ENCODE measurements at regions of chr11 and their contacts with region 1.

Region 1: DNA sequence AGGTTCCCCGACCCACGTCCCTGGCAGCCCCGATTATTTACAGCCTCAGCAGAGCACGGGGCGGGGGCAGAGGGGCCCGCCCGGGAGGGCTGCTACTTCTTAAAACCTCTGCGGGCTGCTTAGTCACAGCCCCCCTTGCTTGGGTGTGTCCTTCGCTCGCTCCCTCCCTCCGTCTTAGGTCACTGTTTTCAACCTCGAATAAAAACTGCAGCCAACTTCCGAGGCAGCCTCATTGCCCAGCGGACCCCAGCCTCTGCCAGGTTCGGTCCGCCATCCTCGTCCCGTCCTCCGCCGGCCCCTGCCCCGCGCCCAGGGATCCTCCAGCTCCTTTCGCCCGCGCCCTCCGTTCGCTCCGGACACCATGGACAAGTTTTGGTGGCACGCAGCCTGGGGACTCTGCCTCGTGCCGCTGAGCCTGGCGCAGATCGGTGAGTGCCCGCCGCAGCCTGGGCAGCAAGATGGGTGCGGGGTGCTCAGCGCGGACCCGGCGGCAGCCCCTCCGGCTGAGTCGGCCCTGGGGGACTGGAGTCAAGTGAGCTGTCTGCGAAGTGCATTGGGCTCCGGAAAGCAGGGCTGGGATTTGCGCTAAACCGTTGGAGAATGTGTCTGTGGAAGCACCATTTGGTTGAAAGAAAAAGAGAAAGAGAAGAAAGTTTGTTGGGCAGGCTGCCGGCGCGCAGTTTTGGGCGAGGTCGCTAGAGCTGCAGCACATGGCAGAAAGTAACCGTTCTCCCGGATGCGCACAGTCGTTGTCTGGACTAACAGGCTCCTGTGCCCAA is at the start of gene CD44:
- DNase-seq: peak; percentile 70 to 95 (median 80)
- ATAC-seq: peak; percentile 77
- H3K4me3 ChIP-seq: peak within 1 kb of the TSS; percentile 88
- H3K4me3 Mint-ChIP-seq: peak within 1 kb of the TSS; percentile 97
- H3K27ac ChIP-seq: peak within 1 kb of the TSS; percentile 79 to 97
- H3K27ac Mint-ChIP-seq: peak within 1 kb of the TSS; percentile 96
- H3K4me1 ChIP-seq: peaks cover 46% of the 10 kb centered on the region
- H3K4me1 Mint-ChIP-seq: peaks cover 55% of the 10 kb centered on the region
- H3K27me3 ChIP-seq: no peaks in the 10 kb centered on the region
- H3K27me3 Mint-ChIP-seq: no peaks in the 10 kb centered on the region
- CTCF ChIP-seq: no peak
- total RNA-seq, gene CD44: 1,283 to 1,330 TPM

Region 2: DNA sequence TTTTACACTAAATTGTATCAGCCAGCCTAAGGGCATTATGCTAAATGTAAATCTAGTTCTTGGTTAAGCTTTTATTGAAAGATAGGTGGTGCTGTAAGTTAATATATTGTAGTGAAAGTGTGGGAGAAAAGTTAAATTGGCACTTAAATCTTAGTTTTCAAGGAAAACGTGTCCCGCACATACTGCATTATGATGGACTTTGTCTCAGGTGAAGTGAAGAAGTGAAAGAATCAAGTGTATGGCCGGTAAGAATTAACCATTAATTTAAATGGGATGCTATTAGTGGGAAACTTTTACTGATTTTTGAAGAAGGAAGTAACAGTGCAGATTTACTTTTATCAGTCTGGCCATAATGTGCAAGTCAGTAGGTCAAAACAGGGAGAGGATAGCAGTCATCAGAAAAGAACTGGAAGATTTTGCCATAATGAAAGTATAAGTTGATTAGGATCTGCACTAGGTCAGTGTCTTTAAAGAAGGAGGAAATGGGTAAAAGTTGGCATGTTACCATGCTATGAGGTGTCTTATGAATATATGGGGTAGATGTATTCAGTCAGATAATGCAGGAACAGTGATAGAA is 141.1 kb before region 1 on chr11:
- CTCF ChIA-PET with region 1: no interaction called
- POLR2A ChIA-PET with region 1: interaction called, 11 read pairs
- intact Hi-C with region 1: loop called (anchors 1 to 5 kb)
- DNase-seq: peak in 3 of 14 experiments; percentile 42 to 56 (median 55)
- ATAC-seq: peak; percentile 64
- H3K4me3 ChIP-seq: no peak overlapping the region
- H3K4me3 Mint-ChIP-seq: peak overlapping the region; percentile 39
- H3K27ac ChIP-seq: no peak overlapping the region
- H3K27ac Mint-ChIP-seq: peak overlapping the region; percentile 48
- H3K4me1 ChIP-seq: no peaks in the 10 kb centered on the region
- H3K4me1 Mint-ChIP-seq: peaks cover 37% of the 10 kb centered on the region
- H3K27me3 ChIP-seq: no peaks in the 10 kb centered on the region
- H3K27me3 Mint-ChIP-seq: no peaks in the 10 kb centered on the region
- CTCF ChIP-seq: peak; percentile 94

Region 3: DNA sequence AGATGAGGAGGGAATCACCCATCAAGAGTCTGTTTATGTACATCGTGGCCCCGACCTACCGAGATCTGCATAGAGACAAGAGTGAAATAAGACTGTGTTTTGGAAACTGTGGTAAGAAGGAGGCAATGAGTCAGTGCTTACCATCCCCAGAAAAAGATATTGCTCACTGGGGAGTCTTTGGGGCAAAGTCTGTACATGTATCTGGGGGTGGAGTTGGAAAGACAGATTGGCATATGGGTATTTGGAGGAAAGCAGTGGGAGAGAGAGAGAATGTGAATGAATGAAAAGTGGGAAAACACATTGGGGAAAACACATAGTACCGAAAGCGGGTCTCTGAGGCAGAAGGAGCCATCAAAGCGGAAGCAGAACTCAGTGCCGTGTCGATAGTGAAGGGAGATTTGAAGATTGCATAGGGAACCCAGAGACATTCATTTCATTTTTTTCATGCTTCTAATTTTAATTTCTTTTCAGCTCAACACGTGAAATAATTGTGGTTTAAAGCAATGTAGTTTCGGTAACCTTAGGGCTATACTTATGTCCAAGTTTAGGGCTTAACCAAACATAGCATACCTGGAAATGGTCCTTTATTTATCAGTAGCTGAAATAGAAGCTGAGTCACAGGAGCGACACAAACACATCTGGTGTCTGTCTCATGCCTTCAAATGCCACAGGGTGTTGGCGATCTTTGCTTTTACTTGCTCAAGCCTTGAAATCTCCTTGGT is 98.8 kb before region 1 on chr11:
- CTCF ChIA-PET with region 1: interaction called, 13 read pairs
- POLR2A ChIA-PET with region 1: interaction called, 22 read pairs
- intact Hi-C with region 1: loop called in 1 of 2 experiments (anchors 1 kb)
- DNase-seq: peak; percentile 37 to 92 (median 57)
- ATAC-seq: peak; percentile 79
- H3K4me3 ChIP-seq: peak overlapping the region; percentile 55
- H3K4me3 Mint-ChIP-seq: peak overlapping the region; percentile 81
- H3K27ac ChIP-seq: peak overlapping the region; percentile 84 to 88
- H3K27ac Mint-ChIP-seq: peak overlapping the region; percentile 92
- H3K4me1 ChIP-seq: peaks cover 43% of the 10 kb centered on the region
- H3K4me1 Mint-ChIP-seq: peaks cover 72% of the 10 kb centered on the region
- H3K27me3 ChIP-seq: no peaks in the 10 kb centered on the region
- H3K27me3 Mint-ChIP-seq: no peaks in the 10 kb centered on the region
- CTCF ChIP-seq: no peak

Region 4: GRCh38 chr11:35082321-35083182 is 56.6 kb before region 1 on chr11:
- CTCF ChIA-PET with region 1: interaction called, 4 read pairs
- POLR2A ChIA-PET with region 1: interaction called, 40 read pairs
- intact Hi-C with region 1: loop called (anchors 1 to 2 kb)
- DNase-seq: peak; percentile 74 to 96 (median 83)
- ATAC-seq: peak; percentile 77
- H3K4me3 ChIP-seq: peak overlapping the region; percentile 47
- H3K4me3 Mint-ChIP-seq: peak overlapping the region; percentile 83
- H3K27ac ChIP-seq: peak overlapping the region; percentile 95 to 99
- H3K27ac Mint-ChIP-seq: peak overlapping the region; percentile 98
- H3K4me1 ChIP-seq: peaks cover 84% of the 10 kb centered on the region
- H3K4me1 Mint-ChIP-seq: peaks cover 97% of the 10 kb centered on the region
- H3K27me3 ChIP-seq: no peaks in the 10 kb centered on the region
- H3K27me3 Mint-ChIP-seq: no peaks in the 10 kb centered on the region
- CTCF ChIP-seq: peak; percentile 17

Region 5: GRCh38 chr11:35122308-35122707 is 16.8 kb before region 1 on chr11:
- CTCF ChIA-PET with region 1: interaction called, 3 read pairs
- POLR2A ChIA-PET with region 1: interaction called, 10 read pairs
- intact Hi-C with region 1: no loop called
- DNase-seq: peak in 4 of 14 experiments; percentile 33 to 60 (median 58)
- ATAC-seq: peak; percentile 78
- H3K4me3 ChIP-seq: no peak overlapping the region
- H3K4me3 Mint-ChIP-seq: peak overlapping the region; percentile 13
- H3K27ac ChIP-seq: peak overlapping the region; percentile 31 to 47
- H3K27ac Mint-ChIP-seq: peak overlapping the region; percentile 84
- H3K4me1 ChIP-seq: peaks cover 42% of the 10 kb centered on the region
- H3K4me1 Mint-ChIP-seq: peaks cover 89% of the 10 kb centered on the region
- H3K27me3 ChIP-seq: no peaks in the 10 kb centered on the region
- H3K27me3 Mint-ChIP-seq: no peaks in the 10 kb centered on the region
- CTCF ChIP-seq: no peak

Region 6: GRCh38 chr11:35182317-35182939 is 43.3 kb after region 1 on chr11:
- CTCF ChIA-PET with region 1: interaction called, 3 read pairs
- POLR2A ChIA-PET with region 1: interaction called, 63 read pairs
- intact Hi-C with region 1: loop called in 1 of 2 experiments (anchors 5 kb)
- DNase-seq: no peak
- ATAC-seq: no peak
- H3K4me3 ChIP-seq: no peak overlapping the region
- H3K4me3 Mint-ChIP-seq: peak overlapping the region; percentile 69
- H3K27ac ChIP-seq: peak overlapping the region in 1 of 2 donors; percentile 24
- H3K27ac Mint-ChIP-seq: peak overlapping the region; percentile 80
- H3K4me1 ChIP-seq: peaks cover 56% of the 10 kb centered on the region
- H3K4me1 Mint-ChIP-seq: peaks cover 97% of the 10 kb centered on the region
- H3K27me3 ChIP-seq: no peaks in the 10 kb centered on the region
- H3K27me3 Mint-ChIP-seq: no peaks in the 10 kb centered on the region
- CTCF ChIP-seq: no peak